CD4-positive, alpha-beta T cell (primary cell): ENCODE measurements at regions of chr19 and their contacts with region 1.

Region 1: DNA sequence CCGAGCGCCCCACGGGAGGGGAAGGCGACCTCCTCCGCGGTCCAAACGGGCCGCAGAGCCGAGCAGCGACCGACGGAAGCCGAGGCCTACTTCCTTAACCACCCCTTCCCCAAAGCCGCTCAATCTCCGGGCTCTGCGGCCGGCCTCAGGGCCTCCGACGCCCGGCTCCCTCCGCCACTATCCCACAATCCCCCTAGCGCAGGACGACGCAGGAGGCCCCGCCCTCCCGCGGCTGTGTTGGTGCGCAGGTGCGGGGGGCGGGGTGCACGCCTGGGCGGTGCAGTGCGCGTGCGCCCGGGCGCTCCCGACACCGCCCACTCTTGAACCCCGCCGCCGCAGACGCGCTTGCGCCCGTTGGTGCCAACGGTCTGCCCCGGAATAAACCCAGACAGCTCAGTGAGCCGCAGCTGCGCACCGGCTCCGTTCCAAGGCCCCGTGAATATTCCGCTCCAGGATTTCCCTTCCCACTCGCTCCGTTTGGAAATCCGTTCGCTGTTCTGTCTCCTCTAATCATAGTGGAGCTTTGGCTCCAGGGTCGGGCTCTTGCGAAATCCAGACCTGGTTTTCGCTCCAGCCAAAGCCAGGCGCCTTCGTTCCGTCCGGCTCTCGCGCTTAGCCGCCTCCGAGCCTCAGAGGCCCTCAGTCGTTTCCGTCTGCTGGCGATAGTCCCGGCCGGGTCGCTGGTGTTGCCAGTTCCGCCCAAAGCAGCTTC is at the start of gene PPP6R1:
- DNase-seq: peak; percentile 87 to 99 (median 92)
- ATAC-seq: peak; percentile 76
- H3K4me3 ChIP-seq: peak within 1 kb of the TSS; percentile 76
- H3K4me3 Mint-ChIP-seq: peak within 1 kb of the TSS; percentile 91
- H3K27ac ChIP-seq: peak within 1 kb of the TSS; percentile 92 to 93
- H3K27ac Mint-ChIP-seq: peak within 1 kb of the TSS; percentile 97
- H3K4me1 ChIP-seq: peaks cover 52% of the 10 kb centered on the region
- H3K4me1 Mint-ChIP-seq: peaks cover 41% of the 10 kb centered on the region
- H3K27me3 ChIP-seq: no peaks in the 10 kb centered on the region
- H3K27me3 Mint-ChIP-seq: no peaks in the 10 kb centered on the region
- CTCF ChIP-seq: no peak
- total RNA-seq, gene PPP6R1: 172 to 182 TPM

Region 2: GRCh38 chr19:55178781-55179599 is 80.0 kb before region 1 on chr19:
- CTCF ChIA-PET with region 1: no interaction called
- POLR2A ChIA-PET with region 1: interaction called, 9 read pairs
- intact Hi-C with region 1: loop called (anchors 5 to 10 kb)
- DNase-seq: peak; percentile 82 to 98 (median 91)
- ATAC-seq: peak; percentile 80
- H3K4me3 ChIP-seq: peak overlapping the region; percentile 46
- H3K4me3 Mint-ChIP-seq: peak overlapping the region; percentile 50
- H3K27ac ChIP-seq: no peak overlapping the region
- H3K27ac Mint-ChIP-seq: peak overlapping the region; percentile 41
- H3K4me1 ChIP-seq: peaks cover 35% of the 10 kb centered on the region
- H3K4me1 Mint-ChIP-seq: peaks cover 34% of the 10 kb centered on the region
- H3K27me3 ChIP-seq: peaks cover 77 to 78% of the 10 kb centered on the region in 2 experiments
- H3K27me3 Mint-ChIP-seq: peaks cover 88% of the 10 kb centered on the region
- CTCF ChIP-seq: no peak

Region 3: DNA sequence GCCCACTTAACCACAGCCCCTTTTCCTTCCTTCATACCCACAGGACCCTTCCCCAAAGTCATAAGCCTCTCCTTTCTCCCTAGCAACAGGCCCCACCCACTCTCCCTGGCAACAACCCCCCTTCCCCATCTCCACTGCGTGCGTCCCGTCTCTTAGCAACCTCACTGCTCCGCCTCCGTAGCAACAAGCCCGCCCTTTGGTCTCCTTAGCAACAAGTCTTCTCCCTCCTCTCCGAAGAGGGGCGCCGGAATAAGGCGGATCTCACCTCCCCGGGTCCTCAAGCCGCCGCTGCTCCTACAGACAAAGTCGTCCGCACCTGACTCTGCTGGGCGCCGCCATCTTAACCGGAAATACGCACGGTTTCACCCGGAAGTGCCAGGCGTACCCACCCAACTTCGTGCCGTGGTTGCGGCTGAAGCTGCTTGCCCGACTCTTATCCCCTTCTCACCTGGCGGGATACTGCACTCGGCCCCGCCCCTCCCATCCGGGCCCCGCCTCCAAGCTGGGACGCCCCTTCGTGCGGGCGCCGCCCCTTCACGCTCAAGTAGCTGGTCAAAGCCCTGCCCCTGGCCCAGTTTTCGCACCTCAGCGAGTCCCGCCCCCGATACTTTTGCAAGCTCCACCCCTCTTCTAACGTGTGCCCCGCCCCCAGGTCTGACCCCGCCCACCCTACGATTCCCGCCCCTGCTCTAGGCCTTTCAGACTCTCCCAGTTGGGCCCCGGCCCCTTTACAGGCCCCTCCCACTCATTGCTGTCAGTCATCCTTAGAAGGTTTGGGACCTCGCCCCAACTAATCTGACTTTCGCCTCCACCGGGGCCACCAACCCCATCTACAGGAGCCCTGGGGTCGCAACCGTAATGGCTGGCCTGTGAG is 21.0 kb after region 1 on chr19 and contains the start of gene HSPBP1:
- CTCF ChIA-PET with region 1: interaction called, 7 read pairs
- POLR2A ChIA-PET with region 1: interaction called, 79 read pairs
- intact Hi-C with region 1: loop called (anchors 1 kb)
- DNase-seq: peak; percentile 88 to 98 (median 92)
- ATAC-seq: peak; percentile 86
- H3K4me3 ChIP-seq: peak within 1 kb of the TSS; percentile 73
- H3K4me3 Mint-ChIP-seq: peak within 1 kb of the TSS; percentile 98
- H3K27ac ChIP-seq: peak within 1 kb of the TSS; percentile 79 to 88
- H3K27ac Mint-ChIP-seq: peak within 1 kb of the TSS; percentile 93
- H3K4me1 ChIP-seq: peaks cover 41% of the 10 kb centered on the region
- H3K4me1 Mint-ChIP-seq: peaks cover 42% of the 10 kb centered on the region
- H3K27me3 ChIP-seq: no peaks in the 10 kb centered on the region
- H3K27me3 Mint-ChIP-seq: no peaks in the 10 kb centered on the region
- CTCF ChIP-seq: no peak
- total RNA-seq, gene HSPBP1: 14.3 to 15.1 TPM

Region 4: GRCh38 chr19:55339048-55339888 is 80.3 kb after region 1 on chr19 and contains the start of gene KMT5C:
- CTCF ChIA-PET with region 1: interaction called, 4 read pairs
- POLR2A ChIA-PET with region 1: interaction called, 43 read pairs
- intact Hi-C with region 1: loop called in 1 of 2 experiments (anchors 1 kb)
- DNase-seq: peak; percentile 100
- ATAC-seq: peak; percentile 73
- H3K4me3 ChIP-seq: peak within 1 kb of the TSS; percentile 71
- H3K4me3 Mint-ChIP-seq: peak within 1 kb of the TSS; percentile 98
- H3K27ac ChIP-seq: peak within 1 kb of the TSS; percentile 91 to 98
- H3K27ac Mint-ChIP-seq: peak within 1 kb of the TSS; percentile 99
- H3K4me1 ChIP-seq: peaks cover 32% of the 10 kb centered on the region
- H3K4me1 Mint-ChIP-seq: peaks cover 21% of the 10 kb centered on the region
- H3K27me3 ChIP-seq: peaks cover 3 to 4% of the 10 kb centered on the region in 2 experiments
- H3K27me3 Mint-ChIP-seq: peaks cover 22% of the 10 kb centered on the region
- CTCF ChIP-seq: peak; percentile 30
- total RNA-seq, gene KMT5C: 113 to 115 TPM

Region 5: GRCh38 chr19:55407800-55408532 is 149.0 kb after region 1 on chr19:
- CTCF ChIA-PET with region 1: no interaction called
- POLR2A ChIA-PET with region 1: interaction called, 20 read pairs
- intact Hi-C with region 1: loop called in 1 of 2 experiments (anchors 5 kb)
- DNase-seq: peak; percentile 91 to 99 (median 96)
- ATAC-seq: peak; percentile 92
- H3K4me3 ChIP-seq: peak overlapping the region; percentile 61
- H3K4me3 Mint-ChIP-seq: peak overlapping the region; percentile 94
- H3K27ac ChIP-seq: peak overlapping the region; percentile 96 to 100
- H3K27ac Mint-ChIP-seq: peak overlapping the region; percentile 99
- H3K4me1 ChIP-seq: peaks cover 30% of the 10 kb centered on the region
- H3K4me1 Mint-ChIP-seq: peaks cover 29% of the 10 kb centered on the region
- H3K27me3 ChIP-seq: no peaks in the 10 kb centered on the region
- H3K27me3 Mint-ChIP-seq: no peaks in the 10 kb centered on the region
- CTCF ChIP-seq: no peak

Region 6: DNA sequence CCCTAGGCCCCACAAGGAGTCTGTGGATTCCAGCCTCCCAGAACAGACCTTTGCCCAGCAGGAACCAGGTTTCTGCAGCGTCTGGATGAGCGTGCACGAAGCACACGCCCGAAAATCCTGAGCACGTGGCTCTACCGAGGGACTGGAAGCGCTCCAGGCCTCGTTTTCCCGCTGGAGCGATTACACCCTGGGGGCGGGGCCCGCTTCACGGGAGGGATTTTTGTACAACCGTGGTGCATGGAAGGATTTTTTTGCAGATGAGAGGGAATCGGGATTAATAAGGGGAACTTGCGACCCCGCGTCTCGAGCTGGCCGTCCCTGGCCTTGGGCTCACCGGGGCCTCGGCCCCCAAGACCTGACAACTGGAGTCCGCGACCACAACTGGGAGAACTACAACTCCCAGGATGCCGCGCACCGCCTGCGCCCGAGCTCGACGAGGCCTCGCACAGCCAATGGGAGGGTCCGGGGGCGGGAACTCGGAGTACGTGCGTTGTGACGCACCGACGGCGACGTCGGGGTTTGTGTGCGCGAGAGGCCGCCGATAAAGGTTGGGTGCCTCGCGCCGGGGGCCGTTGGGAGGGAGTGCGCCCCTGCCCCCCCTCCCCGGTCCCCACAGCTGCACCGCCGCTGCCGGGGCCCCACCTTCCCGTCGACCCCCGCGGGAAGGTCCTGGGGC is 217.3 kb after region 1 on chr19 and contains the start of gene ZNF628:
- CTCF ChIA-PET with region 1: no interaction called
- POLR2A ChIA-PET with region 1: interaction called, 22 read pairs
- intact Hi-C with region 1: no loop called
- DNase-seq: peak; percentile 94 to 99 (median 98)
- ATAC-seq: peak; percentile 93
- H3K4me3 ChIP-seq: peak within 1 kb of the TSS; percentile 76
- H3K4me3 Mint-ChIP-seq: peak within 1 kb of the TSS; percentile 91
- H3K27ac ChIP-seq: peak within 1 kb of the TSS; percentile 72 to 77
- H3K27ac Mint-ChIP-seq: peak within 1 kb of the TSS; percentile 93
- H3K4me1 ChIP-seq: peaks cover 26% of the 10 kb centered on the region
- H3K4me1 Mint-ChIP-seq: peaks cover 38% of the 10 kb centered on the region
- H3K27me3 ChIP-seq: no peaks in the 10 kb centered on the region
- H3K27me3 Mint-ChIP-seq: no peaks in the 10 kb centered on the region
- CTCF ChIP-seq: no peak
- total RNA-seq, gene ZNF628: 26.6 to 27.2 TPM

Region 7: GRCh38 chr19:56314562-56315077 is 1055.6 kb after region 1 on chr19 and contains the start of gene ZSCAN5A:
- CTCF ChIA-PET with region 1: no interaction called
- POLR2A ChIA-PET with region 1: no interaction called
- intact Hi-C with region 1: loop called in 1 of 2 experiments (anchors 5 kb)
- DNase-seq: peak; percentile 93 to 99 (median 96)
- ATAC-seq: peak; percentile 76
- H3K4me3 ChIP-seq: peak within 1 kb of the TSS; percentile 76
- H3K4me3 Mint-ChIP-seq: peak within 1 kb of the TSS; percentile 91
- H3K27ac ChIP-seq: peak within 1 kb of the TSS; percentile 93 to 99
- H3K27ac Mint-ChIP-seq: peak within 1 kb of the TSS; percentile 95
- H3K4me1 ChIP-seq: peaks cover 14% of the 10 kb centered on the region
- H3K4me1 Mint-ChIP-seq: peaks cover 34% of the 10 kb centered on the region
- H3K27me3 ChIP-seq: no peaks in the 10 kb centered on the region
- H3K27me3 Mint-ChIP-seq: no peaks in the 10 kb centered on the region
- CTCF ChIP-seq: no peak
- total RNA-seq, gene ZSCAN5A: 3.3 to 4.4 TPM